ENCODE measurements at regions of chr3 and their contacts with region 1.

Region 1: DNA sequence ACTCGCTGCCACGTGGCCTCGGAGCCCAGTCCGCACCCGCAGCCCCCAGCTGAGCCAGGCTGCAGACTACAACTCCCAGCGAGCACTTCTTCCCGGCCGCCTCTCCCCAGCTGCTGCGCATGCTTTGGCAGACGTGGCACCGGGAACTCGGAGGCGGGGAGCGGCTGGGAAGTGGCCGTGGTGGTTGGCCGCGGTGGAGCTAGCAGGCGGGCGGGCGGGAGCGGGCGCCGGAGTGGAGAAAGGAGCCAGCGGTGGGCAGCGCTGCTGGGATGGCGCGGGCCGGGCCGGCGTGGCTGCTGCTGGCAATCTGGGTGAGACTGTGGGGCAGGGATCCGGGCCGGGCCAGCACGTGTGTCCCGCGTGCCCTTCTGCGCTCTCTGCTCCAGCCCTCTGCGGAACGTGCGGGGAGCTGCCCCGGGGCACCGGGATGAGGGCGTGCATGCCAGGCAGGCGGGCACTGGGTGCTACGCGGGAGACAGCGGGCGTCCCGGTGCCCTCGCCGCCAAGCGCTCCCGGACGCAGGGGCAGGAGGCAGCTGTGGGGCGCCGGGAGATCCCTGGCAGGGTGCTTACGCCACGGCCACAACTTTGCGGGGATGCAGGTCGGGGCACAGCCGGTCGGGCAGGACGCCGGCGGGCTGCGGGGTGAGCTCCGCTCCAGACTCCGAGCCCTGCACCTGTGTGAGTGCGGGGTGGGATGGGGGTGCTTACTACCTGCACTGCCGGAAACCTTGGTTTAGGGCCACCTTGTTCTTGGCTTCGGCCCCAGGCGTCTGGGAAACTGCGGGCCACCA is at the start of gene PDIA5:
- DNase-seq: peak; percentile 92 to 95 (median 94)
- ATAC-seq: peak; percentile 95 to 98 (median 98)
- H3K4me3 ChIP-seq: peak within 1 kb of the TSS; percentile 67 to 98 (median 90)
- H3K27ac ChIP-seq: peak within 1 kb of the TSS; percentile 15 to 86 (median 74)
- H3K4me1 ChIP-seq: peaks cover 0 to 40% (median 24%) of the 10 kb centered on the region in 12 donors
- H3K27me3 ChIP-seq: no peaks in the 10 kb centered on the region
- CTCF ChIP-seq: peak in 1 of 12 donors; percentile 8
- POLR2A ChIP-seq: peak in 1 of 2 donors; percentile 76
- total RNA-seq, gene PDIA5: 3.3 to 16.3 (median 6.4) TPM

Region 2: GRCh38 chr3:123028233-123028828 is 38.8 kb before region 1 on chr3:
- intact Hi-C with region 1: no loop called
- DNase-seq: peak in 3 of 5 donors; percentile 34 to 46 (median 37)
- ATAC-seq: peak in 2 of 4 donors; percentile 51 to 56
- H3K4me3 ChIP-seq: peak overlapping the region; percentile 45 to 82 (median 68)
- H3K27ac ChIP-seq: peak overlapping the region in 9 of 12 donors; percentile 5 to 73 (median 51)
- H3K4me1 ChIP-seq: peaks cover 0 to 34% (median 22%) of the 10 kb centered on the region in 12 donors
- H3K27me3 ChIP-seq: peaks cover 0 to 65% (median 11%) of the 10 kb centered on the region in 9 donors
- CTCF ChIP-seq: peak; percentile 29 to 72 (median 56)
- POLR2A ChIP-seq: no peak

Region 3: DNA sequence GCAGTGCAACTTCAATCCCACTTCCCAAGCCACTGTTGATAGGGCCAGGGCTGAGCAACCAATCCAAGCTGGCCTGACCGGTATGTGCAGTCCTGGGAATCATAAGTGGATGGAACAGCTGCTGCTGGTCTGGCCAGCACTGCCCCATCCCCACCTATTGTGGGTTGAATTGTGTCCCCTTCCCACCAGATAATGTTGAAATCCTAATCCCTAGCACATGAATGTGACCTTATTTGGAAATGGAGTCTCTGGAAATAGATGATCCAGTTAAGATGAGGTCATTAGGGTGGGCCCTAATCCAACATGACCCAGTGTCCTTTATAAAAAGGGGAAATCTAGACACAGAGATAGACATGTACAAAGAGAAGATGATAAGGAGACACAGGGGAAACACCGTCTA is 14.0 kb before region 1 on chr3:
- intact Hi-C with region 1: no loop called
- DNase-seq: peak in 2 of 5 donors; percentile 54 to 59
- ATAC-seq: peak in 2 of 4 donors; percentile 74 to 90
- H3K4me3 ChIP-seq: no peak overlapping the region
- H3K27ac ChIP-seq: peak overlapping the region in 3 of 12 donors; percentile 5 to 40 (median 8)
- H3K4me1 ChIP-seq: peaks cover 0 to 18% (median 1%) of the 10 kb centered on the region in 12 donors
- H3K27me3 ChIP-seq: no peaks in the 10 kb centered on the region
- CTCF ChIP-seq: no peak
- POLR2A ChIP-seq: no peak

Region 4: DNA sequence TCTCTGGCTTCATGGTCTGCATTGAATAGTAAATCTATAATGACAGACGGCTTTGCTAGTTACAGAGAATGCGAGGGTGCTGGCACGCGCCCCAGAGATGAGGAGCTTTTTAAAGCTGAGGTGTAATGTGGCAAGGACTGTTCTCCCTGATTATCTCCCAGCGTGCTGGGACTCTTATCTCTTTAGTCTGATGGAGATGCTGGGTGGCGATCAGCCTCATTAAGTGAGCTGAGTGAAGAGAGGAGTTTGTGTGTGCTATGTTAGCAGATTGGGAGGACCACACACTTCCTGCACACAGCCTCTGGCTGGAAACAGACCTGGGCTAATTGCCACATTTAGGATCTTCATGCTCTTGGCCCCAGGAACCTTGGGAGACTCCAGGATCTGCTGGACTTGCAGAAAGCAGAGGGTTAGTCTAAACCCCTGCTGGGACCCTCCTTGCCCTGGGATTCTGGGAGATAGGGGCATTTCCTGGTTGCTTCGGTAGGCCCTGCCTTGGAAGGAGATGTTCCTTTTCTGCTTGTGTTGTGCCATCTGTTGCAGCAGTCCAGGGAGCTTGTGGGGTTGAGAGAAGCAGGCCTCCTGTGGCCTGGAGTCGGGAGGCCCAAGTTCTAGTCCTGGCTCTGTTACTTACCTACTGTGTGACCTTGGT is 14.8 kb after region 1 on chr3:
- intact Hi-C with region 1: loop called in 1 of 10 experiments (anchors 2 kb)
- DNase-seq: no peak
- ATAC-seq: peak in 2 of 4 donors; percentile 21 to 28
- H3K4me3 ChIP-seq: no peak overlapping the region
- H3K27ac ChIP-seq: peak overlapping the region in 5 of 12 donors; percentile 13 to 64 (median 36)
- H3K4me1 ChIP-seq: peaks cover 4 to 89% (median 63%) of the 10 kb centered on the region in 12 donors
- H3K27me3 ChIP-seq: no peaks in the 10 kb centered on the region
- CTCF ChIP-seq: no peak
- POLR2A ChIP-seq: no peak

Region 5: GRCh38 chr3:123201566-123202427 is 134.7 kb after region 1 on chr3 and contains the start of gene SEC22A:
- intact Hi-C with region 1: loop called in 1 of 10 experiments (anchors 5 kb)
- DNase-seq: peak; percentile 92 to 94 (median 93)
- ATAC-seq: peak; percentile 98 to 100 (median 99)
- H3K4me3 ChIP-seq: peak within 1 kb of the TSS; percentile 74 to 99 (median 96)
- H3K27ac ChIP-seq: peak within 1 kb of the TSS; percentile 56 to 93 (median 84)
- H3K4me1 ChIP-seq: peaks cover 0 to 22% (median 10%) of the 10 kb centered on the region in 12 donors
- H3K27me3 ChIP-seq: no peaks in the 10 kb centered on the region
- CTCF ChIP-seq: no peak
- POLR2A ChIP-seq: peak in 1 of 2 donors; percentile 80
- total RNA-seq, gene SEC22A: 7.6 to 27.0 (median 10.0) TPM

Region 6: DNA sequence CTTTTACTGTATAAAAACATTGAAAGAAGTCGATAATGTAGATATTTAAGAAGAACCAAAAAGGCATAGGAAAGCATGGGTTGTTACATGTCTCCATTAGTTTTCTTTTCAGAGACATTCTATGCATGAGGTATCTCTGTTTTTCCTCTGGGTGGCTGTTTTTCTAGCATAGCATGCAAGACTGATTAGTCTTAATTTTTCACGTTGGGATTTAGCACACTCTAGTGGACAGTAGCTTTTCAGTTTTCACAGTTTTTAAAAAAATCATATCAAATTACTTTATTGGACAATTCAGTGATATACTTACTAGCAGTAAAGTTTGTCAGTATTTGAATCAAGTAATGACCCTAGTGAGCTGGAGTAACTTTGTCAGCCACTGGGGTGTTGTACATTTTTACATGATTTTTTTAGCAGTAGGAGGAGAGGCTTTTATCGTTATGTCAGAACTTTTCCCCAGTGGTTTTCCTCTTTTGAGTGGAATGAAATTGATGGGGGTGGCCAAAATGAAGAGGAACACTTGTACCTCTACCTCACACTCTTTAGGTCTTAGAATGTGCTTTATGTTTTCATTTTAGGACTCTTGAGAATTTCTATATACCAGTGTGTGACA is 191.8 kb after region 1 on chr3:
- intact Hi-C with region 1: loop called in 1 of 10 experiments (anchors 10 kb)
- DNase-seq: no peak
- ATAC-seq: peak in 3 of 4 donors; percentile 22 to 58 (median 56)
- H3K4me3 ChIP-seq: no peak overlapping the region
- H3K27ac ChIP-seq: no peak overlapping the region
- H3K4me1 ChIP-seq: peaks cover 0 to 12% (median 0%) of the 10 kb centered on the region in 12 donors
- H3K27me3 ChIP-seq: no peaks in the 10 kb centered on the region
- CTCF ChIP-seq: peak; percentile 33 to 73 (median 57)
- POLR2A ChIP-seq: no peak

Measured in heart left ventricle (tissue), 16 donors.